ENCODE measurements at regions of chr1 and their contacts with region 1.

Region 1: DNA sequence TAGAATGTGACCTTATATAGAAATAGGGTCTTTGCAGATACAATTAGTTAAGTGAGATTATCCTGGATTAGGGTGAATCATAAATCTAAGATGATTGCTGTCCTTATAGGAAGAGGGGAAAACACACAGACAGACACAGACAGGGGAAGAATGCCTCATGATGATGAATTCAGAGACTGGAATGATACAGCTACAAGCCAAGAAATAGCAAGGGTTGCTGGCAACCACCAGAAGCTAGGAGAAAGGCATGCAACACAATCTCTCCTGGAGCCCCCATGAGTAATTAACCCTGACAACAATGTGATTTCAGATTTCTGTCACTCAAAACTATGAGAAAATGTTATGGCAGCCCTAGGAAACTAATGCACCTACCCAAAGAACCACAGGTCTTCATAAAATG is 19.1 kb upstream of the PPIH start:
- DNase-seq: no peak
- H3K4me3 ChIP-seq: no peak overlapping the region
- H3K27ac ChIP-seq: no peak overlapping the region
- H3K4me1 ChIP-seq: no peaks in the 10 kb centered on the region
- H3K27me3 ChIP-seq: no peaks in the 10 kb centered on the region
- CTCF ChIP-seq: no peak
- POLR2A ChIP-seq: no peak

Region 2: DNA sequence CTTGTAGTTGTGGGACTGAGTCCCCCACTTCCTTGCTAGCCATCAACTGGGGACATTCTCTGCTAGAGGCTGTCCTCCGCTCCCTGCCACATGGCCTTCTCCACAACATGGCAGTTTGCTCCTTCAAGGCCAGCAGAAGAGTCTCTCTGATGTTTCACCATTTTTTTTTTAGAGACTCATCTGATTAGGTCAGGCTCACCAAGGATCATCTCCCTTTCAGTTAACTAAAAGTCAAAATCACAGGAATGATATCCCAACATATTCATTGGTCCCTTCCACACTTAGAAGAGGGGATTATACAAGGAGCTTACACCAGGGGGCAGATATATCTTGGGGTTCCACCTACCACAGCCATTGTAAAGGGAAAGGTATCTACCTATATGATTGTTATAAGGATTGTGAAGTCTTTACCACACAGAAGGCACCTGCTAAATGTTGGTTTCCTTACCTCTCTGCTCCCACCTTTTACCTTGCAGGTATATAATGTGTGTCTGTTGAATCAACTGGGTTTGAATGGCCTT is 235.2 kb before region 1 on chr1:
- intact Hi-C with region 1: loop called (anchors 10 kb)
- DNase-seq: no peak
- H3K4me3 ChIP-seq: no peak overlapping the region
- H3K27ac ChIP-seq: no peak overlapping the region
- H3K4me1 ChIP-seq: no peaks in the 10 kb centered on the region
- H3K27me3 ChIP-seq: no peaks in the 10 kb centered on the region
- CTCF ChIP-seq: no peak
- POLR2A ChIP-seq: no peak

Measured in spleen (tissue), 13 donors.